Posterior vena cava (tissue), 2 donors: ENCODE measurements at regions of chr2 and their contacts with region 1.

Region 1: DNA sequence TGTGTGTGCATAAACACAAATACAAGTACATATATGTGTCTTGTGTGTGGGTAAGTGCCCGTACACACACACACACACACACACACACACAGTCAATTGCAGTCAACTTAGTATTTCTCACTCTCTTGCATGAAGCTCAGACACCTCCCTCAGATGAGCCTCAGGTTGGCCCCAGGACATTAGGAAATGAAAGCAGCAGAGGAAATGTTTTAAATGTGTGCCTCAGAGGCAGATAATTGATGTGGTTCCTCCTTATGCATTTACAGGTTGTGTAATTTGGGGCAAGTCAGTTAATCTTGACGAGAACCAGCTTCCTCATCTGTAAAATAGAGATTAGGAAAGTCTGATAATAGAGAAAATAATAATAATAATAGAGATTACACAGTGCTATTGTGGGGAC is 814.0 kb upstream of the ID2 start:
- DNase-seq: no peak

Region 2: GRCh38 chr2:7785700-7786099 is 82.2 kb before region 1 on chr2:
- intact Hi-C with region 1: no loop called
- DNase-seq: no peak

Region 3: DNA sequence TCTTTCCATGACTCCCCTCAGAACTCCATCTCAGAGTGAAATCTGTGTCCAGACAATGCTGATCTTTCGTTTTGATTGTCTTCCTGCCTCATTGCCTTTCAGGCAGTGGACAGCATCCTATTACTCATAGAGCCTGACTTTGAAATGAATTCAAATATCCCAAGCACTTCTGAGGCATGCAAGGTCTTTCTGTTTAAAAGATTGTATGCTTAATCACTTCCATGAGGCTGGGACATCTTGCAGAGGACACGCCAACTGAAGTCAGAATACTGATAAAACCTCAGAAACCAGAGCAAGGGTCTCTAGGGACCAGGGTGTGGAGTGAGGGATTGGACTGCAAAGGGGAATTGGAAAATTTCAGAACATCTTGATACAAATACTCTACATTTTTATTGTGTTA is 22.5 kb before region 1 on chr2:
- intact Hi-C with region 1: loop called in 1 of 2 experiments (anchors 1 kb)
- DNase-seq: no peak